SK-N-SH (cell line): ENCODE measurements at regions of chr16 and their contacts with region 1.

Region 1: DNA sequence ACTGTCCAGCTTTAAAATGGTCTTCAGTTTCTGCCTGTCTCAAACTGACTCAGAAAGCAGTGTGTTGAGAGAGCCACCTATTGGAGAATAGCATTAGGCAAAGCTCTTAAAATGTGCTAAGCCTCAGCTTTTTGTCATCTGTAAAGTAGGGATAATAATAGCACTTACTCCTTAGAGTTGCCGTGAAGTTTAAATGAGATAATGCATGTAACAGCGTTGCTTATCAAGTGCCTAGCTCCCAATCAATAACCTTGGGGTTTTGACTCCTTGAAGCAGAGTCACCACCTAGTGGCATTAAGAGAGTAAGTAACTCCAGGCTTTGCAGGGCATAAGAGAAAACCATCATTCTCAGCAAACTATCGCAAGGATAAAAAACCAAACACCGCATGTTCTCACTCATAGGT is 163.3 kb downstream of the HS3ST2 start:
- DNase-seq: no peak
- H3K4me3 ChIP-seq: no peak overlapping the region
- H3K27ac ChIP-seq: no peak overlapping the region
- H3K4me1 ChIP-seq: no peaks in the 10 kb centered on the region
- H3K27me3 ChIP-seq: no peaks in the 10 kb centered on the region
- CTCF ChIP-seq: peak; percentile 38; the same call in 1 of the 2 replicates
- EP300 ChIP-seq: no peak
- RAD21 ChIP-seq: 0 out of 2 replicates have a peak, but pooled peaks have one; percentile 55

Region 2: GRCh38 chr16:22912654-22913053 is 64.6 kb before region 1 on chr16:
- CTCF ChIA-PET with region 1: interaction called, 10 read pairs
- POLR2A ChIA-PET with region 1: no interaction called
- DNase-seq: no peak
- H3K4me3 ChIP-seq: no peak overlapping the region
- H3K27ac ChIP-seq: no peak overlapping the region
- H3K4me1 ChIP-seq: no peaks in the 10 kb centered on the region
- H3K27me3 ChIP-seq: no peaks in the 10 kb centered on the region
- CTCF ChIP-seq: no peak
- EP300 ChIP-seq: no peak
- RAD21 ChIP-seq: no peak

Region 3: GRCh38 chr16:22933173-22933572 is 44.1 kb before region 1 on chr16:
- CTCF ChIA-PET with region 1: interaction called, 10 read pairs
- POLR2A ChIA-PET with region 1: no interaction called
- DNase-seq: no peak
- H3K4me3 ChIP-seq: no peak overlapping the region
- H3K27ac ChIP-seq: no peak overlapping the region
- H3K4me1 ChIP-seq: no peaks in the 10 kb centered on the region
- H3K27me3 ChIP-seq: no peaks in the 10 kb centered on the region
- CTCF ChIP-seq: no peak
- EP300 ChIP-seq: no peak
- RAD21 ChIP-seq: no peak

Region 4: GRCh38 chr16:22961206-22961605 is 16.1 kb before region 1 on chr16:
- CTCF ChIA-PET with region 1: interaction called, 10 read pairs
- POLR2A ChIA-PET with region 1: no interaction called
- DNase-seq: no peak
- H3K4me3 ChIP-seq: no peak overlapping the region
- H3K27ac ChIP-seq: no peak overlapping the region
- H3K4me1 ChIP-seq: peaks cover 0 to 7% of the 10 kb centered on the region in 2 experiments; a peak in 2 of 4 replicates
- H3K27me3 ChIP-seq: no peaks in the 10 kb centered on the region
- CTCF ChIP-seq: no peak
- EP300 ChIP-seq: no peak
- RAD21 ChIP-seq: no peak

Region 5: GRCh38 chr16:22989598-22989997 is 12.3 kb after region 1 on chr16:
- CTCF ChIA-PET with region 1: interaction called, 15 read pairs
- POLR2A ChIA-PET with region 1: no interaction called
- DNase-seq: no peak
- H3K4me3 ChIP-seq: no peak overlapping the region
- H3K27ac ChIP-seq: no peak overlapping the region
- H3K4me1 ChIP-seq: no peaks in the 10 kb centered on the region
- H3K27me3 ChIP-seq: no peaks in the 10 kb centered on the region
- CTCF ChIP-seq: no peak
- EP300 ChIP-seq: no peak
- RAD21 ChIP-seq: no peak

Region 6: GRCh38 chr16:23060458-23061320 is 83.4 kb after region 1 on chr16:
- CTCF ChIA-PET with region 1: interaction called, 31 read pairs
- POLR2A ChIA-PET with region 1: no interaction called
- DNase-seq: peak; percentile 75
- H3K4me3 ChIP-seq: no peak overlapping the region; a peak in 1 of 4 replicates
- H3K27ac ChIP-seq: no peak overlapping the region
- H3K4me1 ChIP-seq: peaks cover 0 to 2% of the 10 kb centered on the region in 2 experiments; a peak in 1 of 4 replicates
- H3K27me3 ChIP-seq: no peaks in the 10 kb centered on the region
- CTCF ChIP-seq: peak; percentile 85
- EP300 ChIP-seq: no peak
- RAD21 ChIP-seq: peak; percentile 92

Region 7: DNA sequence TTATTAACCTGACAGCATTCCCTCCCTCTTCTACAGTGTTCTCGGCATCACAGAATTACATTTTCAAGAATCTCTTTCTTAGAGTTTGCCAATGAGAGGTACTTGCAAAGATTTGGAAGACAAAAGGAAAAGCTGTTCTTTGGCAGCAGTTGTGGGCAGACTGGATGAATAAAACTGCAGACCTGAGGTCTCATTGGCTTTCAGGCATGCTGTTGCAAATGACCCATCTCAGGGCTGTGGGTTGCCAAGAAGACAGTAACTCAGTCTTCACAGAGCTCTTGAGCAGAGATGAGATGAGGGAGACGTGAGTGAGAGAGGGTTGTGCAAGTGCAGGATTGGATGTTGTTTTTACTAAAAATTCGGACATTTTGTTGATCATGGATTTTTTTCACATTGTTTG is 183.3 kb after region 1 on chr16:
- CTCF ChIA-PET with region 1: no interaction called
- POLR2A ChIA-PET with region 1: no interaction called
- DNase-seq: no peak
- H3K4me3 ChIP-seq: no peak overlapping the region
- H3K27ac ChIP-seq: no peak overlapping the region
- H3K4me1 ChIP-seq: no peaks in the 10 kb centered on the region
- H3K27me3 ChIP-seq: no peaks in the 10 kb centered on the region
- CTCF ChIP-seq: no peak
- EP300 ChIP-seq: no peak
- RAD21 ChIP-seq: no peak

Region 8: GRCh38 chr16:23274969-23275368 is 297.7 kb after region 1 on chr16:
- CTCF ChIA-PET with region 1: no interaction called
- POLR2A ChIA-PET with region 1: no interaction called
- DNase-seq: no peak
- H3K4me3 ChIP-seq: no peak overlapping the region
- H3K27ac ChIP-seq: no peak overlapping the region
- H3K4me1 ChIP-seq: no peaks in the 10 kb centered on the region
- H3K27me3 ChIP-seq: no peaks in the 10 kb centered on the region
- CTCF ChIP-seq: no peak
- EP300 ChIP-seq: no peak
- RAD21 ChIP-seq: no peak